ENCODE measurements at regions of chr12 and their contacts with region 1.

Region 1: DNA sequence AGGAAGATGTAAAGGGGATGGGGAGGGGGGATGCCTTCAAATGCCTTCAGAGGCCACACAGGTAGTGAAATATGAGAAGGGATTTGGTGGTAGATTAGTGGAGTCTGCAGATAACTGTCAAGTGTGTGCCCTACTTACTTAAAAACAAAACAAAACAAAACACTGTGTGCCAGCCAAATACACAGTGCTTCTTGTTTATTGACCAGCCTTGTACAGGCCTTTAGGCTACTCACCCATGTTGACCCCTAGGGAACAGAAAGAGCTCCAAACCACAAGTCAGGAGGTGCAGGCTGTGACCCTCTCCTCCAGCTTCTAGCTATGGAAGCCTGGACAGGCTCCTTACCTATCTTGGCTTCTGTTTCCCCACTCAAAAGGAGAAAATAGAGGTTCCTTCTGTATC is 562.0 kb downstream of the ETNK1 start:
- DNase-seq: no peak
- H3K4me3 ChIP-seq: no peak overlapping the region
- H3K27ac ChIP-seq: no peak overlapping the region
- H3K4me1 ChIP-seq: no peaks in the 10 kb centered on the region
- H3K27me3 ChIP-seq: no peaks in the 10 kb centered on the region
- CTCF ChIP-seq: no peak
- POLR2A ChIP-seq: no peak

Region 2: DNA sequence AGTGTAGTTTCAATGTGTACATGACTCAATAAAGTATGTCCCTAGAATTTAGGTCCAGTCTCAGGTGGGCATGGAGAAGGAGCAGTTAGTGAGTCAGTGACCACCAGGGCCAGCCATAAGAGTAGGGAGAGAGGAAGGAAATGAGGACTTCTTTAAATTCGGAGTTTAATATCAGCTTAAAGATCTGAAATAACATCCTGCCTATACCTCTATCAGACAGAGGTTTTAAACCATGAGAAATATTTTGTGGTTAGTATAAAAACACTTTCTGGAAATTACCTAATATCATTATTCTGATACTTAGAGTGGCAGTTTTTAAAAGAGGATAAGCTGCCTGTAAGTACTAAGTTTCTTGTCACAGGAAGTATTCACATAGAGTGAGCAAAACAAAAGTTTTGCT is 790.7 kb before region 1 on chr12:
- CTCF ChIA-PET with region 1: no interaction called
- POLR2A ChIA-PET with region 1: no interaction called
- dilution Hi-C with region 1: no loop called
- intact Hi-C with region 1: loop called (anchors 10 kb)
- DNase-seq: no peak
- H3K4me3 ChIP-seq: no peak overlapping the region
- H3K27ac ChIP-seq: no peak overlapping the region
- H3K4me1 ChIP-seq: no peaks in the 10 kb centered on the region
- H3K27me3 ChIP-seq: no peaks in the 10 kb centered on the region
- CTCF ChIP-seq: no peak
- POLR2A ChIP-seq: no peak

Region 3: DNA sequence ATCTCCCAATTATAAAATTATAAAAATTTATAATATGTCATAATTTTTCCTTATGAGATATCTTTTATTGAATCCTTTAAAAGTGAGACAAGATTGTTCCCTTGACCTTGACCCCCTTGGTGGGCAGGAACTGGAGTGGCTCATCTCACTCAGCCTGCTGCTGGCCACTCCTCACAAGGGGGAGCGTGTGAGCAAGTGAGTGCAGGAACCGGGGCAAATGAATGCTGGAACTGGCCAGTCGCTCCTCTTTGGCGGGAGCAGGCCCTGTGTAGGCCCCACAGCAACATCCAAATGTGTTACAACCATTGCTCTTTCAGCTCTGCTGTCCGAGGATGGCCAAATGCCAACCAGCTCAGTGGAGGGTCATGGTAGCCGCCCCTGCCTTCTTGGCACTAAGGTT is 383.2 kb before region 1 on chr12:
- CTCF ChIA-PET with region 1: no interaction called
- POLR2A ChIA-PET with region 1: no interaction called
- dilution Hi-C with region 1: no loop called
- intact Hi-C with region 1: no loop called
- DNase-seq: no peak
- H3K4me3 ChIP-seq: no peak overlapping the region
- H3K27ac ChIP-seq: no peak overlapping the region
- H3K4me1 ChIP-seq: no peaks in the 10 kb centered on the region
- H3K27me3 ChIP-seq: no peaks in the 10 kb centered on the region
- CTCF ChIP-seq: no peak
- POLR2A ChIP-seq: no peak